Activated CD4-positive, alpha-beta memory T cell treated with anti-CD3 and anti-CD28 coated beads for 36 hours (primary cell): ENCODE measurements at regions of chr2 and their contacts with region 1.

Region 1: DNA sequence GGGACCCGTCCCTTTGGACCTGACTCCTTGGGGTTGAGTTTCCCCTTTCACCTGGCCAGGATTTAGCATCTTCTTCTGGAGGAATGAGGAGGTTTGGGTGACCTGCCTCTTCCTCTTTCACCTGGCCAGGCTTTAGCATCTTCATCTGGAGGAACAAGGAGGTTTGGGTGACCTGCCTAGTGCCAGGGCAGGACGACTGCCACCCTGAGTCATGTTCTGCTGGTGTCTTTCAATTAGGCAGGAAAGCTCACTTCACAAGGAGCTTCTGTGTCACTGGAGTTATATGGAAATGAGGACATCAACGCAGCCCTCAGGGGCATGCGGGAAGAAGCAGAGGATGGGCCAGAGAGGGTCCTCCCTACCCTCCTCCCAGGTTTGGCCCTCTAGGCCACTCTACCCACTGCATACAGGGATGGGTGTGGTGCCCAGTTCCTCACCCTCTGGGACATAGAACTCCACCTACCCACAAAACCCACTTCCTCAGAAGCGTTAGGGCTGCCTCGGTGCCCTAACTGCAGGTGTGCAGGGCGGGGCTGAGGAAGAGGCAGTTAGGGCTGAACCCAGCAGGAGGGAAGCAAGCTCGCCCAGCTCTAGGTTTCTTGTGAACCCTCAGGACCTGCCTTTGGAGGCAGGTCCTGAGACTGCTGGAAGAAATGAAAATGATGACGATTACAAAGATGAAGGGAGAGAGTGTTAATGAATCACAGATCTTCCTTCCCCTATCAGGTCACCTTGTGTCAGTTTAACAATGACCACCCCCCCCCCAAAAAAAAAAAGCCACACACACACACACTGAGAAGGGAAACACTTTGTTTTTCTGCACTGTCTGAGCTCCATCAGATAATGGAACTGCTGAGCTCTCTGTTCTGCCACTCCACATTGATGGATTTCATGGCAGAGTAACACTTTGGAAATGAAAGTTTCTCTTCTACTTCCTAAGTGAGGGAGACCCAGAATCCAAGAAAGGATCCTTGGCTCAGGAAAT is 71.0 kb downstream of the ARL4C start:
- DNase-seq: peak; percentile 78
- H3K4me3 Mint-ChIP-seq: peak overlapping the region; percentile 73
- H3K27ac Mint-ChIP-seq: peak overlapping the region; percentile 81
- H3K4me1 Mint-ChIP-seq: peaks cover 79% of the 10 kb centered on the region
- H3K27me3 Mint-ChIP-seq: no peaks in the 10 kb centered on the region

Region 2: GRCh38 chr2:234308813-234309195 is 117.1 kb before region 1 on chr2:
- CTCF ChIA-PET with region 1: no interaction called
- POLR2A ChIA-PET with region 1: no interaction called
- intact Hi-C with region 1: loop called (anchors 2 kb)
- DNase-seq: peak; percentile 88
- H3K4me3 Mint-ChIP-seq: peak overlapping the region; percentile 38
- H3K27ac Mint-ChIP-seq: peak overlapping the region; percentile 89
- H3K4me1 Mint-ChIP-seq: peaks cover 56% of the 10 kb centered on the region
- H3K27me3 Mint-ChIP-seq: no peaks in the 10 kb centered on the region

Region 3: DNA sequence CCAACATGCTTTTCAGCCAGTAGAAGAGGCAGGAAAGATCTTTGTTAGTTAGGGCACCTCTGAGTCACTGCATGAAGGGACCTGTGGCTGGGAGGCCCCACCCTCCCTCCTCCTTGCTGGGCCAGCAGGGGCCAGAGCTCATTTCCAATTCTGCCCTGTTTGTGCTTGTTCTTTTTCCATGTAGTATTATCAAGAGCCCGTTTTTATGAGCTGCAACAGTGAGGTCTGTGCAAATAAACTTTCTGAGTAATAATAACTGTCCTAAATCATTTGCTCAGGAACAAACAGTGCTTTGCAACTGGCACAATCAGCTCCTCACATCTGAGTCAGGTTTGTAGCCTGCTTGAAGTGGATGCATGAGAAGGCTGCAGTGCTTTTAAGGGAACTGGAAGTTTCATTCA is 57.0 kb before region 1 on chr2:
- CTCF ChIA-PET with region 1: interaction called, 4 read pairs
- POLR2A ChIA-PET with region 1: interaction called, 5 read pairs
- intact Hi-C with region 1: loop called (anchors 2 kb)
- DNase-seq: peak; percentile 67
- H3K4me3 Mint-ChIP-seq: no peak overlapping the region
- H3K27ac Mint-ChIP-seq: peak overlapping the region; percentile 49
- H3K4me1 Mint-ChIP-seq: peaks cover 67% of the 10 kb centered on the region
- H3K27me3 Mint-ChIP-seq: no peaks in the 10 kb centered on the region

Region 4: GRCh38 chr2:234403108-234403507 is 22.8 kb before region 1 on chr2:
- CTCF ChIA-PET with region 1: interaction called, 4 read pairs
- POLR2A ChIA-PET with region 1: no interaction called
- intact Hi-C with region 1: loop called (anchors 2 kb)
- DNase-seq: no peak
- H3K4me3 Mint-ChIP-seq: no peak overlapping the region
- H3K27ac Mint-ChIP-seq: no peak overlapping the region
- H3K4me1 Mint-ChIP-seq: peaks cover 42% of the 10 kb centered on the region
- H3K27me3 Mint-ChIP-seq: no peaks in the 10 kb centered on the region

Region 5: DNA sequence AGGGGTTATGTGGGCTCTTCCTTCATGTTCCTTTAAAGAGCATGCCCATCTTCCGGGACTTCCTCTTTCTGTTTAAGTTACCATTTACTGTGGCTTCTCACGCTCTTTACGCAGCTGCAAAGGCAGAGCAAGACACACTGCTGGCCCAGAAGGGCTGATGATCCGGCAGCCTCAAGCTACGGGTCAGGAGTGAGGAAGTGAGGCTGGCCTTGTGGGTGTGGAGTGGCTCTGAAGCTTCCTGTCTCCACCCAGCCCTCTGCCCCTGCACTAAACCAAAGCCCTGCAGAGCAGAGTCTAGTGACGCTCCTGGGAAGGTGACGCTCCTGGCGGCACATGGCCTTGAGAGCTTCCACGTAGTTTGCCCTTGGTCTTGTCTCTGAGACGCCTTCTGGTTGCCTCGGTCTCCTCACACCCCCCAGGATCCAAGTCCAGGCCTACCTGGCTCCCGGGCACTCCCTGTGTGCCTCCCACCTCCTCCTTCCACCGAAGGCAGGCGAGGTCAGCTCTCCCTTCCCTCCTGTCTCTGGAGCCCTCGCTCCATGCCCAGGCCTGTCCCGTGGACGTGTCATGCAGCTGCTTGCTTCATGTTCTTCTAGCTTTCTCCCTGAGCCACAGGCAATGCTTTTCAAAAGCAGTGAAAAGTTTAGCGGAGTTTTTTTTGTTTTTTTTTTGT is 20.6 kb after region 1 on chr2:
- CTCF ChIA-PET with region 1: interaction called, 4 read pairs
- POLR2A ChIA-PET with region 1: interaction called, 6 read pairs
- intact Hi-C with region 1: loop called (anchors 1 kb)
- DNase-seq: peak; percentile 89
- H3K4me3 Mint-ChIP-seq: peak overlapping the region; percentile 66
- H3K27ac Mint-ChIP-seq: peak overlapping the region; percentile 95
- H3K4me1 Mint-ChIP-seq: peaks cover 73% of the 10 kb centered on the region
- H3K27me3 Mint-ChIP-seq: no peaks in the 10 kb centered on the region

Region 6: GRCh38 chr2:234512884-234513669 is 87.2 kb after region 1 on chr2:
- CTCF ChIA-PET with region 1: no interaction called
- POLR2A ChIA-PET with region 1: no interaction called
- intact Hi-C with region 1: no loop called
- DNase-seq: no peak
- H3K4me3 Mint-ChIP-seq: no peak overlapping the region
- H3K27ac Mint-ChIP-seq: no peak overlapping the region
- H3K4me1 Mint-ChIP-seq: peaks cover 3% of the 10 kb centered on the region
- H3K27me3 Mint-ChIP-seq: no peaks in the 10 kb centered on the region

Region 7: GRCh38 chr2:234571620-234572407 is 145.9 kb after region 1 on chr2:
- CTCF ChIA-PET with region 1: no interaction called
- POLR2A ChIA-PET with region 1: no interaction called
- intact Hi-C with region 1: no loop called
- DNase-seq: no peak
- H3K4me3 Mint-ChIP-seq: no peak overlapping the region
- H3K27ac Mint-ChIP-seq: no peak overlapping the region
- H3K4me1 Mint-ChIP-seq: no peaks in the 10 kb centered on the region
- H3K27me3 Mint-ChIP-seq: peaks cover 23% of the 10 kb centered on the region